ENCODE measurements at regions of chr6 and their contacts with region 1.

Region 1: DNA sequence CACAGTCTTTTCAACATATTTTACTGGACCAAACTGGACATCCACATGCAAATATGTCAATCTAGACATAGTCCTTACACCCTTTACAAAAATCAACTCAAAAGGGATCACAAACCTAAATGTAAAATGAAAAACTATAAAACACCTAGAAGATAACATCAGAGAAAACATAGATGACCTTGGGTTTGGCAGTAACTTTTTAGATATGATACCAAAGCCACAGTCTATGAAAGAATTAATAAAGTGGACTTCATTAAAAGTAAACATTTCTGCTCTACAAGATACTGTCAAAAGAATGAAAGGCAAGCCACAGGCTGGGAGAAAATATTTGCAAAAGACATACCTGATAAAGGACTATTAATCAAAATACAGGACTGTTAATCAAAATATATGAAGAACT is 21.7 kb downstream of the BEND3 start:
- DNase-seq: no peak
- ATAC-seq: no peak
- H3K4me3 ChIP-seq: no peak overlapping the region
- H3K27ac ChIP-seq: no peak overlapping the region
- H3K4me1 ChIP-seq: peaks cover 0 to 4% of the 10 kb centered on the region in 2 experiments; a peak in 1 of 5 replicates
- H3K27me3 ChIP-seq: no peaks in the 10 kb centered on the region
- CTCF ChIP-seq: no peak
- EP300 ChIP-seq: no peak
- POLR2A ChIP-seq: no peak
- RAD21 ChIP-seq: no peak

Region 2: DNA sequence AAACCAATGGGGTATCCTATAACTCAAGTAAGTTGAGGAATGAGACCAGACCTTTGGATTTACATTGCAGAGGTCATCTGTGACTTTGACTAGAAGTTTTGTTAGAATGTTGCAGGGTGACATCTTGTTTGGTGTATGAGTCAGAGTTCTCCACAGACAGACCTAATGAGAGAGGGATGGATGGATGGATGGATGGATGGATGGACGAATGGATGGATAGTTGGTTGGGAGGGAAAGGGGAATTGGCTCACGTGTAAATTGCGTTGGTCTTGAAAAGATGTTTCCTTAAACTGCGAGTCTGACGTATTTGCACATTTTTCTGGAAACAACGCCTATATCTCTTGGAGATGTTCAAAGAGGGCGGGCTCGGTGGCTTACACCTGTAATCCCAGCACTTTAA is 66.7 kb before region 1 on chr6:
- CTCF ChIA-PET with region 1: no interaction called
- POLR2A ChIA-PET with region 1: no interaction called
- in situ Hi-C with region 1: no loop called
- intact Hi-C with region 1: loop called (anchors 5 kb)
- DNase-seq: no peak
- ATAC-seq: no peak
- H3K4me3 ChIP-seq: no peak overlapping the region
- H3K27ac ChIP-seq: no peak overlapping the region
- H3K4me1 ChIP-seq: peaks cover 0 to 15% of the 10 kb centered on the region in 2 experiments; a peak in 1 of 5 replicates
- H3K27me3 ChIP-seq: no peaks in the 10 kb centered on the region
- CTCF ChIP-seq: no peak
- EP300 ChIP-seq: no peak
- POLR2A ChIP-seq: no peak
- RAD21 ChIP-seq: no peak